ENCODE measurements at regions of chr3 and their contacts with region 1.

Region 1: DNA sequence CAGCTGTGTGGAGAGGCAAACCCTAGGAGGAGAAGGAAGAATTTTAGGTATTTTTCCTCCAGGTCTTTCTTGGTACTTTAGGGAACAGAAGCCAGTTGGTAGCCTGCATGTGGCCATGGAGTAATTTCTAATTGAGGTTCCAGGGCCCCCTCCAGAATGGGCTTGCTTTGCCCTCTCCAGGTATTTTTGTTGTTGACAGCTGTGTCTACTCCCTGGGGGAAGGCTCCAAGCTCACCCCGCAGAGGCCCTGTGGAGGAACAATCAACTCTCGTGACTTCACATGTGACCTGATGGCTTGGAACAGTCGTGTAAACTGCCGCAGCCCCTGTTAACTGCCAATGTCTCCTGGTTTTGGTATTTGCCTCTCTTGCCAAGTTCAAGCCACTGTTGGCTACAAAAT is 192.7 kb downstream of the CACNA2D3 start:
- DNase-seq: no peak
- ATAC-seq: no peak
- H3K4me3 ChIP-seq: no peak overlapping the region
- H3K4me3 Mint-ChIP-seq: no peak overlapping the region
- H3K27ac ChIP-seq: no peak overlapping the region
- H3K27ac Mint-ChIP-seq: no peak overlapping the region
- H3K4me1 ChIP-seq: no peaks in the 10 kb centered on the region
- H3K4me1 Mint-ChIP-seq: no peaks in the 10 kb centered on the region
- H3K27me3 ChIP-seq: no peaks in the 10 kb centered on the region
- H3K27me3 Mint-ChIP-seq: peaks cover 0 to 7% of the 10 kb centered on the region in 2 donors
- CTCF ChIP-seq: no peak

Region 2: DNA sequence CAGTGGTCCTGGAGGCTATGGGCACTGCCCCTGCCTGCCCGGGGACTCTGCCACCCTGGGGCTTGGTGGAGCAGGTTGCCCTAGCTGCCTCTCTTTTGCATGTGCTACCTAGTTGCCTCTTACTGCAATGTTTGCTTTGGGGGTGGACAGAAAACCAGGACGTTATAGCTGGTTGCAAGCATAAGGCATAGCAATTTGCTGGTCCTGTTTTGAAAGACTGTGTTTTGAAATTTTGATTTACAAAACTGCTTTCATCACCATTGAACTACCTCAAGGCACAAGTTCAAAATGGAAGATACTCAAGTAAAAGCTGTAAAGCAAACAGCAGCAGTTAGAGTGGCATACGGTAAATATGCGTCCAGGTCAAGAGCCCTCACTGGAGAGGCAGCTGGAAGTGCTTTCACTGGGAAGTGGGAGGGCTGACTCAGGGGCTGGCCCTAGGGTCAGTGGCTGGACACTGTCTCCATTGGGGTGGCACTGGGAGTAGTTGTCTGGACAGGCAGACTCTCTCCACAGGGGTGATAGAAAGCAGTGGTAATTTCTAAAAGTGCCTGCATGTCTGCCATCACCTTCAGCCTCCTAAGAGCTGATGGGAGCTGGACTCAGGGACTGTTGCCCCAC is 607.0 kb before region 1 on chr3:
- intact Hi-C with region 1: no loop called
- DNase-seq: no peak
- ATAC-seq: no peak
- H3K4me3 ChIP-seq: no peak overlapping the region
- H3K4me3 Mint-ChIP-seq: no peak overlapping the region
- H3K27ac ChIP-seq: no peak overlapping the region
- H3K27ac Mint-ChIP-seq: no peak overlapping the region
- H3K4me1 ChIP-seq: no peaks in the 10 kb centered on the region
- H3K4me1 Mint-ChIP-seq: peaks cover 4 to 5% of the 10 kb centered on the region in 2 donors
- H3K27me3 ChIP-seq: no peaks in the 10 kb centered on the region
- H3K27me3 Mint-ChIP-seq: no peaks in the 10 kb centered on the region
- CTCF ChIP-seq: no peak

Region 3: GRCh38 chr3:54358969-54359648 is 44.0 kb after region 1 on chr3:
- intact Hi-C with region 1: loop called (anchors 2 kb)
- DNase-seq: no peak
- ATAC-seq: no peak
- H3K4me3 ChIP-seq: no peak overlapping the region
- H3K4me3 Mint-ChIP-seq: no peak overlapping the region
- H3K27ac ChIP-seq: no peak overlapping the region
- H3K27ac Mint-ChIP-seq: no peak overlapping the region
- H3K4me1 ChIP-seq: no peaks in the 10 kb centered on the region
- H3K4me1 Mint-ChIP-seq: no peaks in the 10 kb centered on the region
- H3K27me3 ChIP-seq: no peaks in the 10 kb centered on the region
- H3K27me3 Mint-ChIP-seq: no peaks in the 10 kb centered on the region
- CTCF ChIP-seq: no peak